Aorta (tissue), 5 donors: ENCODE measurements at regions of chr19 and their contacts with region 1.

Region 1: DNA sequence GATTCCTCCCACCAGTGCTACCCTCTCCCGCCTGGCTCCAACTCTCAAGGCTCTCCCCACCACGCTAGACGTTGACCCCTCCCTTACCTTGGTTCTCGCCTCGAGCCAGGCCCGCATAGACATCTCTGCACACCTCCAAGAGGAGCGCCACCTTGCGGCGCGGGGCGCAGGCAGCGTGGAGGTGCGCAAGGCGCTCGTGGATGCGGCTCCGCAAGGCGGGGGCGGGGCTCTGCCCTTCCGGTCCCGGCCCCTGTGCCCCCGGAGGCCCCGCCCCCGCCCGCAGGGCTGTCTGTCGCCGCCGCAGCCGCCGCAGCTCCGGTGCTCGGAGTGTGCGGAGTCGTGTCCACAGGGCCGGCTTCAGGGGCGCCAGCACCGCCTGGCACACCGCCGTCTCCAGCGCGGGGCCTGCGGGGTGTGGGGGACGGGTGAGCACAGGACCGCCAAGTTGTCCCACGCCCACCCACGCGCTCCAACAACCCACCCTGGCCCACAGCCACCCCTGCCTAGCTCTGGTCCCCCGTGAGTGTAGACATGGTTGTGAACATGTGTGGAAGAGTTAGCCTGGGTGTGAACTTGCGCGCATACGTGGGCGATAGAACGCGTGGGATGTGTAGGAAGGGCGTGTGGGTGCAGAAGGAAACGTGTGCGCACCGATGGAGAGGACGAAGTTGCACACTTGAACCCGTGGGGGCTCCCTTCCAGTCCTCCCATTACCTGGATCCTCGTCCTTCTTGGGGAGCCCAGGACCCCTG is 8.0 kb downstream of the RINL start:
- DNase-seq: peak; percentile 90 to 94
- ATAC-seq: peak; percentile 91
- H3K4me3 ChIP-seq: peak overlapping the region in 1 of 2 donors; percentile 12
- H3K27ac ChIP-seq: no peak overlapping the region
- H3K4me1 ChIP-seq: no peaks in the 10 kb centered on the region
- H3K27me3 ChIP-seq: no peaks in the 10 kb centered on the region

Region 2: GRCh38 chr19:38514812-38515633 is 355.0 kb before region 1 on chr19:
- intact Hi-C with region 1: loop called in 1 of 2 experiments (anchors 10 kb)
- DNase-seq: peak; percentile 73 to 91
- ATAC-seq: peak; percentile 82
- H3K4me3 ChIP-seq: no peak overlapping the region
- H3K27ac ChIP-seq: no peak overlapping the region
- H3K4me1 ChIP-seq: no peaks in the 10 kb centered on the region
- H3K27me3 ChIP-seq: peaks cover 0 to 2% of the 10 kb centered on the region in 2 donors

Region 3: DNA sequence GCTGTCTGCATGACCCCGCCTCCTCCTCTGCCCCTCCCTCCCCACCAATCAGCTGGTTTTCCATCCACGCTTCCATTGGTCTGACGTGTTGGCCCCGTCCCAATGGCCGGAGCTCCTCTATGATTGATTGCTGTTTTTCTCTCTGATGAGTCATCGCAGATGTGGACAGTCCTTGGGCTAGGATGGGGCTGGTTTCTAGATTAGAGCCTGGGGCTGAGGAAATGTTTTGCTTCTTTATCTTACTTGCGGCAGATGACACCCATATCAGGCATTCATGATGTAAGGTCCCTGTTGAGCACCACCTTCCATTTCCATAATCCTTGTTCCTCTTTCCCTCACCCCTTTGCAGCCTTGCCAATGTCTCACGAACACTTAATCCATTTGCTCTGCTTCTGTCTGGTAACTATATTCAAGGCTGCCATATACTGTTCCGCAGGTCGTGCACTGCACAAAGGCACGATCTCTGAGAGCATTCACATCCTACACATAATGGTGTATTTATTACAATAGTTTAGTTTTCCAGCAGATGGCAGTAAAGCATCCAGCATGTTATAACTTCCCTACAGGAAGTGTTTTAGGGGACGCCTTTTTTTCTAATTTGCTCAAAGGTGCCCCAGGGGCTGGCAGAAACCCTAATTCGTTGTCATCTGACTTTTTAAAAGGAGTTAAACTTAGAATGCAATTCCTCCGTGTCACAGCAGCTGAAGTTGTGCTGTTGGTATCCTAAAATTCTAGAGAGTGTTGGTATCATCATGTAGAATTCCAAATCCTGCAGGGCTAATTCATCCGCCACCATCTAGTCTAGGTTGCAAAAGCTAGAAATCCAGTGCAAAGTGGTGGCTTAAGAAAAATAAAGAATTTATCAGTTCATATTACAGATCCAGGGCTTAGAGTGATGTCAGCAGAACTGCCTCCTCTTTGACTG is 325.7 kb before region 1 on chr19:
- intact Hi-C with region 1: loop called in 1 of 2 experiments (anchors 10 kb)
- DNase-seq: peak; percentile 89 to 90
- ATAC-seq: peak; percentile 85
- H3K4me3 ChIP-seq: no peak overlapping the region
- H3K27ac ChIP-seq: peak overlapping the region in 1 of 2 donors; percentile 29
- H3K4me1 ChIP-seq: no peaks in the 10 kb centered on the region
- H3K27me3 ChIP-seq: no peaks in the 10 kb centered on the region

Region 4: DNA sequence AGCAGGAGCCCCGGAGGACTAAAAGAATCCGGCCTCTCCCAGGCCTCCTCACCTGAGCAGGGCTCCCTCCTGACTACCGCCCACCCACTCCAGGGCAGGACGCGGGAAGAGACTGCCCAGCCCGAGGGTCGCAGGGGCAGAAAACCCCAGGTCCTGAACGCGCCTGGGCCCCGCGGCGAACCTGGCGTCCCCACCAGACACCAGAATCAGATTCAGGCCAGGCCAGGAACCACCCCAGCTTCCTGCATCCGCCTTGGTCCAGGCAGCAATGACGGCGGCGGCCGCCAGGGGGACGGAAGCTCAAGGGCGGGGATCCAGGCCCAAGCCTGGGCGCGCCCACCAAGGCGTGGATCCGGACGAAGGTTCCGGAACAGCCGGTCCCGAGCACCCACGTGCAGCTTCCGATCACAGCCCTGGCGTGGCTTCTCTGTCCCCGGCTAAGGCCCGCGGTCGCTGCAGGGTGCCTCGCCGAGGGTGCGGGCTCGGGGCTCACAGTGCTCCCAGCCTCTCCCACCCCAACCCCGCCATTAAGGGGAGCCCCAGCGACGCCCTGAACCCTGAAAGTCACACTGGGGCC is 100.3 kb before region 1 on chr19:
- intact Hi-C with region 1: loop called in 1 of 2 experiments (anchors 10 kb)
- DNase-seq: peak; percentile 94 to 96
- ATAC-seq: peak; percentile 89
- H3K4me3 ChIP-seq: no peak overlapping the region
- H3K27ac ChIP-seq: no peak overlapping the region
- H3K4me1 ChIP-seq: no peaks in the 10 kb centered on the region
- H3K27me3 ChIP-seq: no peaks in the 10 kb centered on the region

Region 5: GRCh38 chr19:38899447-38900219 is 29.6 kb after region 1 on chr19 and contains the starts of genes NFKBIB and SIRT2:
- intact Hi-C with region 1: no loop called
- DNase-seq: peak; percentile 99 to 100
- ATAC-seq: peak; percentile 98
- H3K4me3 ChIP-seq: peak within 1 kb of the TSS; percentile 56 to 92
- H3K27ac ChIP-seq: peak within 1 kb of the TSS in 1 of 2 donors; percentile 24
- H3K4me1 ChIP-seq: no peaks in the 10 kb centered on the region
- H3K27me3 ChIP-seq: no peaks in the 10 kb centered on the region
- total RNA-seq, gene NFKBIB: 16.0 to 24.5 TPM
- total RNA-seq, gene SIRT2: 34.6 to 42.4 TPM

Region 6: GRCh38 chr19:38917516-38918491 is 47.8 kb after region 1 on chr19:
- intact Hi-C with region 1: no loop called
- DNase-seq: peak in 1 of 2 donors; percentile 69
- ATAC-seq: no peak
- H3K4me3 ChIP-seq: no peak overlapping the region
- H3K27ac ChIP-seq: no peak overlapping the region
- H3K4me1 ChIP-seq: no peaks in the 10 kb centered on the region
- H3K27me3 ChIP-seq: no peaks in the 10 kb centered on the region